Activated CD8-positive, alpha-beta T cell treated with anti-CD3 and anti-CD28 coated beads, Interleukin-2, amount 10 ng/mL, durations not matched to agents 7 days and 5 days (primary cell): ENCODE measurements at regions of chr15 and their contacts with region 1.

Region 1: GRCh38 chr15:90931737-90932659 is at the start of gene HDDC3:
- DNase-seq: peak; percentile 94
- ATAC-seq: peak; percentile 59
- H3K4me3 Mint-ChIP-seq: peak within 1 kb of the TSS; percentile 97
- H3K27ac Mint-ChIP-seq: peak within 1 kb of the TSS; percentile 99
- H3K4me1 Mint-ChIP-seq: peaks cover 63% of the 10 kb centered on the region
- H3K27me3 Mint-ChIP-seq: no peaks in the 10 kb centered on the region
- total RNA-seq, gene HDDC3: 23.8 to 26.9 TPM

Region 2: DNA sequence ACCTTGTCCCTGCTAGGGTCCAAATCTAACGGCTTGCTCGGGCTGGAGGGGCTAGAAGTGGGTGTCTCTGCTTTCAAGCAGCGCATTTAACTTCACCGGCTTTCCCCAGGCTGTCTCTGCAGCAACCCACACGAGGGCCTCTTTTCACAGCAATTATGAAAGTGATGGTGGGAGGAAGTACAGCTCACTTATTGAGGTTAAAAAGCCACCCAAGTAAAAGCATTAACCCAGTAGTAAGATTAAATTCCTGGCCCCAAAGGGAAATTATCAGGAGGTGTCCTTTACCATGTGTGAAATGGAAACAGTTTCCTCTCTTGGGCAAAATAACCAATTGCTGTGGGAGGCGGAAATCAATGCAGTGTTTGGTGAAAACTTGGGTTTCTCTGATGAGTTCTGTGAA is 625.4 kb before region 1 on chr15:
- CTCF ChIA-PET with region 1: interaction called, 11 read pairs
- POLR2A ChIA-PET with region 1: no interaction called
- DNase-seq: peak; percentile 60
- ATAC-seq: peak; percentile 84
- H3K4me3 Mint-ChIP-seq: peak overlapping the region; percentile 42
- H3K27ac Mint-ChIP-seq: peak overlapping the region; percentile 88
- H3K4me1 Mint-ChIP-seq: peaks cover 32% of the 10 kb centered on the region
- H3K27me3 Mint-ChIP-seq: peaks cover 4% of the 10 kb centered on the region

Region 3: GRCh38 chr15:90716976-90717821 is 214.8 kb before region 1 on chr15 and contains the start of gene BLM:
- CTCF ChIA-PET with region 1: interaction called, 30 read pairs
- POLR2A ChIA-PET with region 1: interaction called, 18 read pairs
- DNase-seq: peak; percentile 97
- ATAC-seq: peak; percentile 99
- H3K4me3 Mint-ChIP-seq: peak within 1 kb of the TSS; percentile 81
- H3K27ac Mint-ChIP-seq: peak within 1 kb of the TSS; percentile 94
- H3K4me1 Mint-ChIP-seq: peaks cover 25% of the 10 kb centered on the region
- H3K27me3 Mint-ChIP-seq: no peaks in the 10 kb centered on the region
- total RNA-seq, gene BLM: 52.3 to 57.4 TPM

Region 4: DNA sequence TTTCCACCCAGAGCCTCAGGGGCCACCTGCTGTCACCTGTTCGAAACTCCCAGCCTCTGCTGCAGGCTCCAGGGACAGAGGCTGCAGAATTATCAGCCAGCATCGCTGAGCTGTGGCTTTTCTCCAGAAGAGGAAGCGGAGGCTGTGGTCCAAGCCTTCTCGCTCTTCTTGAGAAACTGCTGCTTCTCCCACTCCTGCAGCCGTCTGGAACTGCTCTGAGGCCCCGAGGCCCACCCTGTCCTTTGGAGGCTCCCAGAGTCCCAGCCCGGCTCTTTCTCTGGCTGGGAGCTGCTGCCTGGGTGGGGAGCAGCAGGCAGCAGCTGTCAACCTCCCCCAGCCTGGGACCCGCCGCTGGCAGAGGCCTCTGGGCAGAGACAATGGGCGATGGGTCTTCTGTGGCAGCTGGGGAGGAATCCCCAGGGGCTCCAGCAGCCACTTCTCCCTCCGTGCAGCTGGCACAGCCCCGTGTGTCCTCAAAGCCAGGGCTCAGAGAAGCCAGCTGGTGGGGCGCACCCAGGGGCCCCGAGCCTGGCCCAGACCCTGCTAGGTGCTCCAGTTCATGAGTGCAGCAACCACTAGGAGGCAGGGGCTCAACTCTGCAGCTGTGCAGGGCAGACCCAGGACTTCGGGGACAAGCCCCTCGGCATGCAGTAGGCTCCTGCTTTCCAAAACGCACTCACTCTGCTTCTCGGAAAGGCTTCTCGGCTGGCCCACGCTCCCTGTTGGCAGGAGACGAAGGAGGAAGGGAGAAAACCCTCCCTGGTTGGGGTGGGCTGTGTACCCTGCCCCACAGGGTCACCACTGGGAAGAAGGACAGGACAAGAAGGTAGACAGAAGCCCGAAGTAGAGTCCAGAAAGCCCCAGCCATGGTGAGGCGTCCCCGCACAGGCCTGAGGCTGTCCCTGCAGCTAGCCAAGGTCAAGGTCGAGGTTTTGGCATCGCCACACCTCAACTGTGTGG is 113.5 kb before region 1 on chr15:
- CTCF ChIA-PET with region 1: interaction called, 22 read pairs
- POLR2A ChIA-PET with region 1: interaction called, 4 read pairs
- DNase-seq: peak; percentile 45
- ATAC-seq: peak; percentile 50
- H3K4me3 Mint-ChIP-seq: peak overlapping the region; percentile 56
- H3K27ac Mint-ChIP-seq: peak overlapping the region; percentile 87
- H3K4me1 Mint-ChIP-seq: peaks cover 77% of the 10 kb centered on the region
- H3K27me3 Mint-ChIP-seq: no peaks in the 10 kb centered on the region

Region 5: GRCh38 chr15:90915808-90916440 is 16.1 kb before region 1 on chr15:
- CTCF ChIA-PET with region 1: interaction called, 34 read pairs
- POLR2A ChIA-PET with region 1: interaction called, 3 read pairs
- DNase-seq: no peak
- ATAC-seq: no peak
- H3K4me3 Mint-ChIP-seq: no peak overlapping the region
- H3K27ac Mint-ChIP-seq: no peak overlapping the region
- H3K4me1 Mint-ChIP-seq: no peaks in the 10 kb centered on the region
- H3K27me3 Mint-ChIP-seq: no peaks in the 10 kb centered on the region

Region 6: GRCh38 chr15:90946538-90946937 is 14.5 kb after region 1 on chr15:
- CTCF ChIA-PET with region 1: interaction called, 154 read pairs
- POLR2A ChIA-PET with region 1: interaction called, 3 read pairs
- DNase-seq: no peak
- ATAC-seq: no peak
- H3K4me3 Mint-ChIP-seq: no peak overlapping the region
- H3K27ac Mint-ChIP-seq: no peak overlapping the region
- H3K4me1 Mint-ChIP-seq: no peaks in the 10 kb centered on the region
- H3K27me3 Mint-ChIP-seq: no peaks in the 10 kb centered on the region

Region 7: DNA sequence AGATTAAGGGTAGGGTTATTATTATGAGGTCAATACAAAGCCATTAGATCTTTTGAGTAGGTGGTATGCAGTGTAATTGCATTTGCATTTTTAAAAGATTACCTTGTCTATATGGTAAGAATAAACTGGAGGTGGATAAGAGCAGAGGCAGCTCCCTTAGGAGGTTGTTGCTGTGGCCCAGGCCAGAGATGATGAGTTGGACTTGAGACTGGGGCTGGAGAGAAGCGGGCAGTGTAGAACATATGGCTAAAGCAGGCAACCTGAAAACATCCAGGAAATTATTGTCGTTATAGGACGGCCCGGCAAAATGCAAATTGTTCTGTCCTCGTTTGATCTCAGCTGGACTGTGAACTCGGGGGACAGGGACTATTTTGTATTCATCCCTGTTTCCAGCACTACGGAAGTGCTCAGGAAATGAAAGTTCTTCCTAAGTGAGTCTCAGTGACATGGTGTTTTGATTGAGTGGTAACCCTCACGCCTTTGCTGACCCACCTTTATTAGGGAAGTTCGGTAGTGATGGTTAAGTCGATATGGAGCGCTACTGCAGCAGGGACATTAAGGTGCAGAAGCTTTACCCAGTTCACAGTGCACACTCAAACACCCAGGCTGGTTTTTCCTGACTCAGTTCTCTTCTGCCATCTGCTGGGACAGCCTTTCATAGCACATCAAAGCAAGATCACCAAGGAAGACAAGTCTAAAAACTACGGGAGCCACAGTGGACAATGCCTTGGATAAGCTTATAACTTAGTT is 117.6 kb after region 1 on chr15:
- CTCF ChIA-PET with region 1: interaction called, 21 read pairs
- POLR2A ChIA-PET with region 1: no interaction called
- DNase-seq: peak; percentile 79
- ATAC-seq: peak; percentile 90
- H3K4me3 Mint-ChIP-seq: no peak overlapping the region
- H3K27ac Mint-ChIP-seq: no peak overlapping the region
- H3K4me1 Mint-ChIP-seq: peaks cover 27% of the 10 kb centered on the region
- H3K27me3 Mint-ChIP-seq: peaks cover 35% of the 10 kb centered on the region

Region 8: GRCh38 chr15:91068966-91069365 is 137.0 kb after region 1 on chr15:
- CTCF ChIA-PET with region 1: no interaction called
- POLR2A ChIA-PET with region 1: no interaction called
- DNase-seq: no peak
- ATAC-seq: no peak
- H3K4me3 Mint-ChIP-seq: no peak overlapping the region
- H3K27ac Mint-ChIP-seq: no peak overlapping the region
- H3K4me1 Mint-ChIP-seq: no peaks in the 10 kb centered on the region
- H3K27me3 Mint-ChIP-seq: peaks cover 32% of the 10 kb centered on the region